Activated B cell treated with CpG ODN at 0.5 μM for 24 hours (primary cell): ENCODE measurements at regions of chr11 and their contacts with region 1.

Region 1: DNA sequence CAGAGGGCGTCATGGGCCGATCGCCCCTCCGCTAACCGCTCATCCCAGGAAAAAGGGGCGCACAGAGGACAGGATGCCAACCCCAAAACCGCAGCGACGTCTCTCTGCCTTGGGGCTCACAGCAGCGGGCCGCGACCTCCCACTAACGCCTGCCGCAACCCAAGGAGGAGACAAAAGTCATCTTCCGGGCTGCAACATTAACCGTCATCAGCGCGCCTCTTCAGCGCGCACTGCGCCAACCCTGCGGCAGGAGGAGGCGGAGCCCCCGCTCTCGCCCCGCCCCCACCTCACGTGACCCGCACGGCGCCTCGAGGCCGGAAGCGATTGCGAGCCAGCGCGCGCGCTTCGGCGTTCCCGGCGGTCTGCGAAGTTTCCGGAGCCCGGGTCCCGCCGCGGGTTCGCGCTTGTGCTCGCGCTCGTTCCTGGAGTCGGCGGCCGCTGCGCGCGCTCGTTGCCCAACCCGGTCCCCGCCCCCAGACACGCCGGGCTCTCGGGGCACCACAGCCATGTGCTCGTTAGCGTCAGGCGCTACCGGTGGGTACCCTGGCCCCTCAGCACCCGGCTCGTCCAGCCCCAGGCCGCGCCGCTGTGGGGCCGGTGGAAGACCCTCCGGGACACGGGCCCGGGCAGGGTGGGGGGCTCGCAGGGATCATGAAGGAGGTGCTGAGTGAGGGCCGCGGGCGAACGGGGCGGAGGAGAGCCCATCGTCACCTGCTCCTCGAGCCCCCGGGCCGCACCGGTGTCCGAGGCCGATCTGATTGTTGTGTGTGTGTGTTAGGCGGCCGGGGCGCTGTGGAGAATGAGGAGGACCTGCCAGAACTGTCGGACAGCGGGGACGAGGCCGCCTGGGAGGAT is at the start of gene PRMT3:
- DNase-seq: peak; percentile 99
- ATAC-seq: peak; percentile 84
- H3K4me3 Mint-ChIP-seq: peak within 1 kb of the TSS; percentile 97
- H3K27ac Mint-ChIP-seq: peak within 1 kb of the TSS; percentile 100
- H3K4me1 Mint-ChIP-seq: peaks cover 28% of the 10 kb centered on the region
- H3K27me3 Mint-ChIP-seq: no peaks in the 10 kb centered on the region
- CTCF ChIP-seq: peak; percentile 62
- total RNA-seq, gene PRMT3: 21.7 and 24.9 TPM in 2 replicates

Region 2: DNA sequence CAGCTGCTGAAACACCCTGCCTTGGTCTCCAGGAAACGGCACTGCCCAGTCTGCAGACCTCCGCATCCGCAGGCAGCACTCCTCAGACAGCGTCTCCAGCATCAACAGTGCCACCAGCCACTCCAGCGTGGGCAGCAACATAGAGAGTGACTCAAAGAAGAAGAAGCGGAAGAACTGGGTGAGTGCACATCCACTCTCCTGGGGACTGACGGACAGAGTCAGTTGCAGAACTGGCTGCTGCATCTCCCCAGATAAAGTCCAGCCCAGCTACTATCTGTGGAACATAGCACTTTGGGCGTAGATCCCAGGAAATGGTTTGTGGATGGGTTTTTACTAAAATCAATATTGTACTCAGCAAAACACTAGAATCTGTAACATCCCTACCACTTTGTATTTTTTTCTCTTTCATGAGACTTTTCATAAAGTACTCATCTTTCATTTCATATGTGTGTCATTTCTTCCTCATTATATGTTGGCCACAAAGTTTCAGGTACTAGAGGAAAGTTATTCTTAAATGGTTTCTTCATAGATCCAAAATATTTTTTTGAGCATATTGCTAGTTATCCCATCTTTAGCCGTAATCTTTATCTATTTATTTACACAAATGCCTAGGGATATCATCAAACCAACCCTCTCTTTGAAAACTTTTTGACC is 307.3 kb before region 1 on chr11:
- CTCF ChIA-PET with region 1: no interaction called
- POLR2A ChIA-PET with region 1: no interaction called
- intact Hi-C with region 1: loop called (anchors 1 kb)
- DNase-seq: no peak
- ATAC-seq: peak; percentile 98
- H3K4me3 Mint-ChIP-seq: peak overlapping the region; percentile 12
- H3K27ac Mint-ChIP-seq: no peak overlapping the region
- H3K4me1 Mint-ChIP-seq: peaks cover 36% of the 10 kb centered on the region
- H3K27me3 Mint-ChIP-seq: peaks cover 12% of the 10 kb centered on the region
- CTCF ChIP-seq: no peak

Region 3: DNA sequence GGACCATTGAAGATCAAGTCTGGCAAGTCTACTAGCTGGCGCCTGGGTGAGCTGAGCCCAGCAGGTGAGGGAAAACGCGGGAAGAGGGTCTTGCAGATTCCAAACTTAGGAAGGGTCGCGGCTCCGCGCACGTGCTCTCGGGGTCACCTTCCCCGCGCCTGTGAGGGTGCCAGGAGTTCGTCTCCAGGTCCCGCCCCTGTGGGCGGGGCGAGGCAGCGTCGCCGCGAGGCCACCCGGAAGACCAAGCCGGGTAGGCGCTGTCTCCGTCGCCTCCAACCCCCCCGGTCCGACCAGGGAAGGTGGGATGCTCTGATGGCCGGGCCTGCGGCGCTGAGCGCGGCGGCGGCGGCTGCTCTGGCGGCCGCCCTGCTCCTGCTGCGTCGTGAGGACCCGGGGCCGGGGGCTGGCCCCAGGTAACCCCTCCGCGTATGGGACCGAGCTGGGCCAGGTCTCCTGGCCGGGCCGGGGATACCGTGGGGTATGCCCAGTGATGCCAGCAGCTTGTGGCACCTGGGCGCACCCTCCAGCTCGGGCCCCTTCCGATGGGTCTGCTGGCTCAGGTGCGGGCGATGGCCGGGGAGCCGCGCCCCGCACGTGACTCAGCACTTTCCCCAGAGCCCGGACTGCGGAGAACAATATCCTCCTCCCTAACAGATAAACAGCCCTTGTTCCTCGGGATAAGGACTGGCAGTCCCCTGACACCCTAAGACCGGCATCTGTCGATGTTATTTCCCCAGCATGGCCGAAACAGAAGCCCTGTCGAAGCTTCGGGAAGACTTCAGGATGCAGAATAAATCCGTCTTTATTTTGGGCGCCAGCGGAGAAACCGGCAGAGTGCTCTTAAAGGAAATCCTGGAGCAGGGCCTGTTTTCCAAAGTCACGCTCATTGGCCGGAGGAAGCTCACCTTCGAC is 23.7 kb before region 1 on chr11 and contains the start of gene HTATIP2:
- CTCF ChIA-PET with region 1: no interaction called
- POLR2A ChIA-PET with region 1: interaction called, 22 read pairs
- intact Hi-C with region 1: loop called (anchors 1 kb)
- DNase-seq: peak; percentile 78
- ATAC-seq: peak; percentile 87
- H3K4me3 Mint-ChIP-seq: peak within 1 kb of the TSS; percentile 88
- H3K27ac Mint-ChIP-seq: peak within 1 kb of the TSS; percentile 89
- H3K4me1 Mint-ChIP-seq: peaks cover 57% of the 10 kb centered on the region
- H3K27me3 Mint-ChIP-seq: no peaks in the 10 kb centered on the region
- CTCF ChIP-seq: no peak
- total RNA-seq, gene HTATIP2: 35.7 and 36.5 TPM in 2 replicates

Region 4: DNA sequence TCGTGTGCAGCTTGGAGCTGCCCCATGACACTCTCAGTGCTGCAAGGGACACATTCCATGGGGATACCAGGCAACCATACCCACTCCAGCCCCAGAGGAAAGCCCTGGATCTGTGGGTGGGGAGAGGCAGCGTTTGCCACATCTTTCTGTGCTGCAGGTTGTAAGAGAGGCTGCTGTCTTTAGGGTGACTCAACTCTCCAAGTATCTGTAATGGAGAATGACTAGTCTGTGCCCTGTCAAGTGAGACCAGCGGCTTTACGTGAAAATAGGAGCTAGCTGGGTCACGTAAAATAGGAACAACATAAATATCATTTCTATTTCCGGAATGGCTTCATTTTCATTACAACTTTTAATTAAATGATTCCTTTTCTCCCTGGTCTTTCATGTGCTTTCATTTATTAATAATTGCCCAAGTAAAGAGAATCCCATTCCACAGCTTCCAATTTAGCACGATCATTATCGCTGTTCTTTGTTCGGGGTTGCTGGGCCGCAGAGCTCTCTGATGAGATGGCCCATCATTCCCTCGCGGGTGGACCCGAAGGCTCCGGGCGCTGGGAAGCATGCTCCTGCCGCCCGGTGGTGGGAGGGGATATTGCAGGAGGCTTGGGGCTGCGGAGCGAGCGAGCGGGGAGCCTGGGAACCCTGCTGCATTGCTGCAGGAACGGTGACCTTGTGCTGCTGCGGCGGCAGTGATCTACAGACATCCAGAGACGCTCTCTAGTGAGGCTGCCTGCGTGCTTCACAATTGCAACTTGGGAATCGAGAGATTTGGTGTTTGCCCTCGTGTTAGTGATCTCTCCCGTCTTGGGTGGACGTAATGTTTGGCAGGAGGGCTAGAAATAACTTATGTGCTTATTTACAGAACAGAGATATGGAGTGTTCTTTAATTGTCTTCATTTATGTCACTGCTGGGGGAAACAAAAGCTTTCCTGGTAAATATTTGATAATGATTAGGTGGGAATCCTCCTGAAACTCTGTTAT is 222.5 kb after region 1 on chr11:
- CTCF ChIA-PET with region 1: no interaction called
- POLR2A ChIA-PET with region 1: no interaction called
- intact Hi-C with region 1: loop called (anchors 2 kb)
- DNase-seq: peak; percentile 29
- ATAC-seq: peak; percentile 68
- H3K4me3 Mint-ChIP-seq: peak overlapping the region; percentile 58
- H3K27ac Mint-ChIP-seq: no peak overlapping the region
- H3K4me1 Mint-ChIP-seq: peaks cover 7% of the 10 kb centered on the region
- H3K27me3 Mint-ChIP-seq: peaks cover 69% of the 10 kb centered on the region
- CTCF ChIP-seq: no peak